ENCODE measurements at regions of chr4 and their contacts with region 1.

Region 1: DNA sequence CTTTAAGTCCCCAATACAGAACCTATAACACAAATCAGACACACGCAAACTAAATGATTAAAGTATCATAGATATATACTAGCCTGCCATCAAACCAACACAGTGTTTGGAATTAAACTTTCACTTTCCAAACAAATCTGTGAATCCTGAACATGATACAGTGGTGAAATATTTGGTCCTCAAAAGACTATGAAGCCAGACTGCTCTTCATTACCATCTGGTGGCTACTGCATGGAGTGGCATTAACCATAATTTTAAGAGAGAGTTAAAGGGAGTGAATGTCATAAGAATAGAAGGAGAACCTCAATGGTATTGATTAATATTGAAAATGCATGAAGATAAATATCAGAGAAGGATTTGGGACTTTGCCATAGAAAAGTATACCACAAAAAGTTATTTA is 9.2 kb upstream of the GABRA4 start:
- DNase-seq: no peak
- ATAC-seq: peak; percentile 55

Region 2: DNA sequence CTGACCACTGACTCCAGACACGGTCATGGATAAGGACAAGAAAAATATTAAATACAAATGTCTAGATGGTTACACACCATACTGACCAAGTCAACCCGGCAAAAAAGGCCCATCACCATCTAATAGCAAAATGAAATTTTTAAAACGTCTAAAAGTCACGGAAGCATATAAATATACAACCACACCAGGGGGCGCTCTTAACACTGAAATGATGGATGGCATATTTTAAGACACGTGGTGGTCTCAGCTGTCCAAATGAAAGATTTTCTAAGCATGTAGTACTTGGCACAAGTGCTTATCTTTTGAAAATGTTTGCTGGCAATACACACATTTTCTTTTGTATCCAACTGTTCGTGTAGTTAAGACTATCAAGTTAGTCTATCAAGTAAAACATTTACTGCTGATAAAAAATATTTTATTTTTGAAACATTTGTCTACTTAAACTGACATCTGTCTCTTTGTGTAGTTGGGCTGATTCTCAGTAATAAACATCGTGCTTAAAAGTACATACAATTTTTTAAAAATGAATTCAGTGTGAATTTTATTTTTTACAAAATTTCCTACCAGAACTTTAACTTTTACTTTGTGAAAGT is 158.2 kb before region 1 on chr4:
- intact Hi-C with region 1: no loop called
- DNase-seq: no peak
- ATAC-seq: no peak

Region 3: DNA sequence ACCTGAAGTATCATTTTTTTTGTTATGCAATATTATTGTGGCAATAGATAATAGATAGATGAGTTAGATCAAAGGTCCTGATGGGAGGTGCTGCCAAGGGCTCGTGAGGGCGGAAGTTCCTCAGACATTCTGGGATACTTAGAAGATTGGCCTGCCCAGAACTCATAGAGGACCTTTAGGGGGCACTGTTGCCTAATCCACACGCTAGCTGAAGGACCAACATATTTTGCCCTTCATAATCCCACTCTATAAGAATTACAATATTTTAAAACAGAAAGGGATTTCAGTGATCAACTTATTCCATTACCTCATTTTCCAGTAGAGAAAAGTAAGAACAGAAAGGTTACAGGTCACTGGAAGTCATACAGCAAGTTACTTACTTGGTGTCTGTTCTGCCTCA is 70.6 kb before region 1 on chr4:
- intact Hi-C with region 1: loop called (anchors 10 kb)
- DNase-seq: peak; percentile 26
- ATAC-seq: peak; percentile 79